Calu3 (cell line): ENCODE measurements at regions of chr9 and their contacts with region 1.

Region 1: DNA sequence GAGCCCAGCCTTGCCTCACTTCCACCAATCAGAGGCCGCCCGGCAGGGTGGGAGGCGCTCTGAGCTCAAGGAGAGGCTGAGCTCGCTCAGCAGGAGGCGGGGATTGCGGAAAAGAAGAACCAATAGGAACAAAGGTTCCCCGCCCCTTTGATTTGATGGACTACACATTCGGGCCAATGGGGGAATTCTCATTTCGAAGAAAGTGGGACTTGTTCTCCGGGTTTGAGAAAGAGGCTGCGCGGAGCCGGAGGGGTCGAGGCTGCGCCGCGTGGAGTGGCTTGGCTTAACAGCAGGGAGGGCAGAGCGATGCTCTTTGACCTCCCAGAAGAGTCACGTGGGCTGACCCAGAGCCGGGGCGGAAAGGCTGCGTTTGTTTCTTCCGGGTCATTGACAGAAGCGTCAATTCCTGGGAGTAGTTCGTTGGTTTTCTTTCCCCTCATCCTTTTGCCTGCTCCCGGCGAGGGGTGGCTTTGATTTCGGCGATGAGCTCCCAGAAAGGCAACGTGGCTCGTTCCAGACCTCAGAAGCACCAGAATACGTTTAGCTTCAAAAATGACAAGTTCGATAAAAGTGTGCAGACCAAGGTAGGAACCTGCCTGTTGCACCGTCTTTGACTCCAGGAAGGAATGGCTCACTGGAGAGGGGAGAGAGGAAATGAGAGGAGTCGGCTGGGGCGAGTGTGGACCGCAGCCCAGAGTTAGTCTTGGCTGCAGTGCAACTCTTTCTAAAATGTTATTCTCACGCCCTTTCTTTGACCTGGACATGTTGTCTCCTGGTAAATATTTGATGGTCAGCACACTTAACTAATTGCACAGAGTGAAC is at the start of gene C9orf85:
- DNase-seq: peak; percentile 96
- H3K4me3 Mint-ChIP-seq: peak within 1 kb of the TSS; percentile 88
- H3K27ac Mint-ChIP-seq: peak within 1 kb of the TSS; percentile 96
- H3K4me1 Mint-ChIP-seq: no peaks in the 10 kb centered on the region
- H3K27me3 Mint-ChIP-seq: no peaks in the 10 kb centered on the region
- CTCF ChIP-seq: no peak
- total RNA-seq, gene C9orf85: 8.3 and 9.8 TPM in 2 replicates

Region 2: DNA sequence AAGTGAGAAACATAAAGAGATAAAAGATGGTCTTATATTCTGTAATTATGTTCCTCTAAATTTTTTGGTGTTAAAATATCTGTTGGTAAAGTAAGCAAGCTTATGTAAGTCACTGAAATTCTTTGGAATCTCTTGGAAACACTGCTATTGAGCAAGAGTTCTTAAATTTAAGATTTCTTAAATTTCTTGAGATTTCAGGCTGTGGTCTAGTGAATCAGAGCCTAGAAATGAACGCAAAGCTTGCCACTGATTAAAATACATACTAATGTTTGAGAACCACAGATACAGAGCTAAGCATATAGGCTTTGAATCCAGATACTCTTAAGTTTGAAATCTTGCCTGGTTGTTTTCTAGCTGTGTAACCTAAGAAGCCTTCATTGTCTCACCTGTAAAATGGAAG is 923.5 kb before region 1 on chr9:
- CTCF ChIA-PET with region 1: no interaction called
- intact Hi-C with region 1: no loop called
- DNase-seq: no peak
- H3K4me3 Mint-ChIP-seq: no peak overlapping the region
- H3K27ac Mint-ChIP-seq: no peak overlapping the region
- H3K4me1 Mint-ChIP-seq: no peaks in the 10 kb centered on the region
- H3K27me3 Mint-ChIP-seq: no peaks in the 10 kb centered on the region
- CTCF ChIP-seq: no peak

Region 3: DNA sequence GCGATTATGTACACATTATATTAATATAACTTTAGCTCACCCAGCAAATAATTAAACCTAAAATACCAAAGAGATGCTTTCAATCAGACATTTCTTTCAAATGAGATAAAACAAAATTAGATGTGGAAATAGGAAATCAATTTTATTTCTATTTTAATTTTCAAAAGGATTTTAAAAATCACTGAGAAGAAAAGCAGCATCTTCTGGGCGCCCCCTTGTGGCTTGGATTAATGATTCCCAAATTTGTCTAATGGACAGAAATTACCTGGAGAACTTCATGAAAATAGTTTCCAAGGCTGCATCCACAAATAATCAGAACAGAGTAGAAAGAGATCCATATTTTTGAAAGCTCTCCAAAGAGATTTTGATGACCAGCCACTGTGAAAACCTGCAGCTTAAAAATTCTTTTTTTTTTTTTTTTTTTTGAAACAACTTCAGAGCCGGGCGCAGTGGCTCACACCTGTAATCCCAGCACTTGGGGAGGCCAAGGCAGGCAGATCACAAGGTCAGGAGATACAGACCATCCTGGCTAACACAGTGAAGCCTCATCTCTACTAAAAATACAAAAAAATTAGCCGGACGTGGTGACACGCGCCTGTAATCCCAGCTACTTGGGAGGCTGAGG is 92.2 kb before region 1 on chr9:
- CTCF ChIA-PET with region 1: no interaction called
- intact Hi-C with region 1: loop called (anchors 5 kb)
- DNase-seq: peak; percentile 57
- H3K4me3 Mint-ChIP-seq: no peak overlapping the region
- H3K27ac Mint-ChIP-seq: no peak overlapping the region
- H3K4me1 Mint-ChIP-seq: peaks cover 27% of the 10 kb centered on the region
- H3K27me3 Mint-ChIP-seq: no peaks in the 10 kb centered on the region
- CTCF ChIP-seq: peak; percentile 53

Region 4: DNA sequence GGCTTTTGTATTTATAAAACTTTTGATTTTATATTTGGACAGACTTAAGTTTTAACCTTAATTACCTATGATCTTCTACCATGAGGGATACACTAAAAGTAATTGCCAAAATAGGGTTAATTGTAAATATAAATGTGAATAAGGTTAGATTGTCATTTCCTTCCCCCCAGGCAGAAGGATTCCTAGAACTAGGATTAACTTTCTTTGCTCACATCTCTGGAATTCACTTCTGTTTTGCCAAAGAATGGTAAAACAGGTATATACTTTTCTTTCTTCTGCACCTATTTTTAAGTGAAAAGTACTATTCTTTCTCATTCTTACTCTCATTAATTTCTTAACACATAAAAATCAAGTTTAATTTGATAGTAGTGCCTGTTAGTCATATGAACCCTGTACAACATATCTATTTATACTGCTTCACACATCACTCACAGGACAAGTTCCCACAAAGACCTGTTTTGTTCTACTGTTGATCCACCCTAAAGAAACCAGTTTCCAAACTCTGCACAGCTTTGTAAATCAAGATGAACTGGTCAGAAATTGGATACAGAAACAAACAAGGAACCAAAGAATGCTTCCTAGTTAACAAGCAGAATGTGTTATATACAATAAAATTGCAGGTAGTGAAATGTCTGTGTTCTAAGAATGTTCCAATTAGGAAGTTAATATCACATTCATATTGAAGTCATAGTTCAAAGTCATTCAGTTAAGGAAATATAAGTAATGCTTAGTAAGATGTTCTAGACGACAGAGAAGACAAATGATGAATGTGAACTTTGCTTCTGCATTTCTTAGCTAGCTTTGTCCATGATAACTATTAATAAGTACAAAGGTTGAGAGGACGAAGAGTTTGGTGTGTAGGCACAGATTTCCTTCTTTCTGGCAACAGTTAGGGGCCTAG is 33.3 kb after region 1 on chr9:
- CTCF ChIA-PET with region 1: interaction called, 4 read pairs
- intact Hi-C with region 1: loop called (anchors 2 kb)
- DNase-seq: peak; percentile 5
- H3K4me3 Mint-ChIP-seq: peak overlapping the region; percentile 48
- H3K27ac Mint-ChIP-seq: peak overlapping the region; percentile 74
- H3K4me1 Mint-ChIP-seq: peaks cover 9% of the 10 kb centered on the region
- H3K27me3 Mint-ChIP-seq: no peaks in the 10 kb centered on the region
- CTCF ChIP-seq: no peak

Region 5: DNA sequence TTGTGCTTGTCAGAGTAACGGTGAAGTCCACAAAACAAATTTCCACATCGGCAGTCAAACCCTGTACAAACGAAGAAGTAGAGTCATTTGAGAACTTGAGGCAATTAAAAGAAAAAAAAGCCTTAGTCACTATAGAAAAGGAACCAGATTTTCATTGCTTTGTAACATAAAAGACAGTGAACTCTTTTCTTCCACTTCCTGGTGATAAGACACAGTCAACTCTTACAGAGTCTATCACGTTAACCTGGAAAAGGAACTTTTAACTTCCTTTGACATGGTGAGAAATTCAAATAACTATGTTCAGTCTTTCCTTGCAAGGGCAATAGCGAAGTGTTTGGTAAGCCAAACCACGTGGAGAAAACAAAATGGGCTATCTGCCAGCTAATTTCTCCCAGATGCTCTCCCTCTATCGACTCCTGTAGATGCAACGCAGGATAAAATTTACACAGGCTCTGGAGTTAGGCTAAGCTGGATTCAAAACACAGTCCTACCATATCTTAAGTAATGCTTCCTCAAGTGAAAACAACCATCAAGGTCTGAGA is 444.6 kb after region 1 on chr9:
- CTCF ChIA-PET with region 1: no interaction called
- intact Hi-C with region 1: loop called (anchors 5 kb)
- DNase-seq: no peak
- H3K4me3 Mint-ChIP-seq: peak overlapping the region; percentile 24
- H3K27ac Mint-ChIP-seq: peak overlapping the region; percentile 63
- H3K4me1 Mint-ChIP-seq: peaks cover 50% of the 10 kb centered on the region
- H3K27me3 Mint-ChIP-seq: no peaks in the 10 kb centered on the region
- CTCF ChIP-seq: no peak